GM12878 (cell line): ENCODE measurements at regions of chr11 and their contacts with region 1.

Region 1: DNA sequence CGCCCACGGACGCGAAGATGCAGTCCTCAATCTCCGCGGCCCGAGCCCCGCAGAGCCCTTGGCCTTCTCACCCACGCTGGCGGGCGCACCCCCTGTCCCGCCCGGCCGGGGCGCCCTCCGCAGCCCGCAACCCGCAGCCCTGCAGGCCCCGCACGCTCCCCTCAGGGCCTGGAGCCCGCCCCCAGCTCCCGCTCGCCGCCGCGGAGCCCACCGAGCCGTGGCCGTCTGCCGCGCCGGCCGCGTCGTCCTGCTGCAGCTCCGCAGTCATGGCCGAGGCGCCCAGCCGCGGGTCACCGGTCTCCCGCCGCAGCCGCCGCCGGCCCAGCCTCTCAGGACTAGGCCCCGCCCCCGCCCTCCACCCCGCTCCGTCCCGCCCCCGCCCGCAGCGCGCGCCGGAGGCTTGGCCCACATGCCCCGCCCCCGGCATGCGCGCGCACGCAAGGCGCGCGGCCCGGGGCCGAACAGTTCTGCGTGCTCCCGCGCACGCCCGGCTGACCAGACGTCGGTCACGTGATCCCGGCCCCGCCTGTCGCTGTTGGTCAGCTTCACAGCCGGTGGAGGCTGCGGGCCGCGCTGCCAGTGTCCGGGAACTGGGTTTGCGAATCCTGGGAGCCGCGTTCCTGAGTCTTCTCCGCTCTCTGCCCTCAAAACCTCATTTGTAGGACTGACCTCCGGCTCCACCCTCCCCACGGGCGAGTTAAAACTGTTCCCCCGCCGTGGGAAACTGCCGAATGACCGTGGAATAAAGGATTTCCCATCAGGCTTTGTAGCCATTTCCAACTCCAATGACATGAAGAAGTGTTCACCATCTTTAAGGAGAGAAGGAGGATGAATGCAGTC is at the start of gene USP28:
- DNase-seq: peak; percentile 68
- ATAC-seq: peak; percentile 89
- H3K4me3 ChIP-seq: peak within 1 kb of the TSS; percentile 86
- H3K27ac ChIP-seq: peak within 1 kb of the TSS; percentile 84
- H3K4me1 ChIP-seq: peaks cover 20% of the 10 kb centered on the region
- H3K27me3 ChIP-seq: no peaks in the 10 kb centered on the region
- CTCF ChIP-seq: 0 out of 6 replicates have a peak, but pooled peaks of 1 of the 3 experiments have one; percentile 5
- EP300 ChIP-seq: no peak
- POLR2A ChIP-seq: peak; percentile 94
- RAD21 ChIP-seq: no peak
- polyA plus RNA-seq, gene USP28: 2.8 to 4.0 TPM

Region 2: GRCh38 chr11:113773416-113774173 is 101.9 kb before region 1 on chr11 and contains the start of gene ZW10:
- CTCF ChIA-PET with region 1: interaction called, 3 read pairs
- POLR2A ChIA-PET with region 1: no interaction called
- RAD21 ChIA-PET with region 1: no interaction called
- SMC1A ChIA-PET with region 1: no interaction called
- in situ Hi-C with region 1: no loop called
- intact Hi-C with region 1: loop called (anchors 2 kb)
- DNase-seq: peak; percentile 86
- ATAC-seq: peak; percentile 100
- H3K4me3 ChIP-seq: peak within 1 kb of the TSS; percentile 91
- H3K27ac ChIP-seq: peak within 1 kb of the TSS; percentile 80
- H3K4me1 ChIP-seq: no peaks in the 10 kb centered on the region
- H3K27me3 ChIP-seq: no peaks in the 10 kb centered on the region
- CTCF ChIP-seq: peak; percentile 61 to 83 (median 67)
- EP300 ChIP-seq: no peak
- POLR2A ChIP-seq: peak; percentile 93
- RAD21 ChIP-seq: peak; percentile 32; the same call in 1 of the 2 replicates
- polyA plus RNA-seq, gene ZW10: 5.4 to 8.6 TPM